Heart right ventricle (tissue), 16 donors: ENCODE measurements at regions of chr1 and their contacts with region 1.

Region 1: GRCh38 chr1:114386129-114387009 is 124.6 kb downstream of the TRIM33 start:
- DNase-seq: no peak
- ATAC-seq: peak in 3 of 8 donors; percentile 39 to 53 (median 42)
- H3K4me3 ChIP-seq: no peak overlapping the region
- H3K27ac ChIP-seq: no peak overlapping the region
- H3K4me1 ChIP-seq: peaks cover 0 to 19% (median 0%) of the 10 kb centered on the region in 9 donors
- H3K27me3 ChIP-seq: no peaks in the 10 kb centered on the region
- CTCF ChIP-seq: no peak

Region 2: GRCh38 chr1:116067566-116067890 is 1681.2 kb after region 1 on chr1:
- intact Hi-C with region 1: loop called in 1 of 10 experiments (anchors 10 kb)
- DNase-seq: peak; percentile 14 to 16
- ATAC-seq: peak in 7 of 8 donors; percentile 51 to 93 (median 86)
- H3K4me3 ChIP-seq: no peak overlapping the region
- H3K27ac ChIP-seq: peak overlapping the region in 8 of 10 donors; percentile 3 to 71 (median 36)
- H3K4me1 ChIP-seq: no peaks in the 10 kb centered on the region
- H3K27me3 ChIP-seq: no peaks in the 10 kb centered on the region
- CTCF ChIP-seq: no peak